Colonic mucosa (tissue), 4 donors: ENCODE measurements at regions of chr19 and their contacts with region 1.

Region 1: DNA sequence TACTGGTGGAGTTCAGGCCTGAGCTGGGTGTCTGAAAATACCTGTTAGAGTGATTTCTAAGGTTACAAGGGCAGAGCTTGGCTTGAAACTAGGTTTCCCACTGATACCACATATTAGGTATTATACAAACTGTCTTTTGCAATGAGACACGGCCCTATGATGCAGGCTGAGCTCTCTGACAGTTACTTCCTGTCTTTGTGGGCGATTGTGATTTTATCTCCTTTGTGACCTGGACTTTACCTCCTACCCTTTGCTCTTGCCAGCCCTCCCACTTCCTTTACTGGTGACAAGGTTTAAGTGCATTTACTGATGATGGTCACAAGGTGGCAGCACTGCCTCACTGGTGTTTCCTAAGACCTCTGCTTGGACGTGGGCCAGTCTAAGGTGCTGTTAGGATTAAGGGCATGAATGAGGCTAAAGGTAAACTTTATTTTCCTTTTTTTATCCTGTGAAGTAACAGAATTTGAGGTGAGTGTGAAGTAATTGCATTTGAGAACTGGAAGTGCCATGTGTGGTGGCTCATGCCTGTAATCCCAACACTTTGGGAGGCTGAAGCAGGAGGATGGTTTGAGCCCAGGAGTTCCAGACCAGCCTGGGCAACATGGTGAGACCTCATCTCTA is 7.7 kb upstream of the CXCL17 start:
- DNase-seq: peak; percentile 93
- H3K4me3 ChIP-seq: no peak overlapping the region
- H3K27ac ChIP-seq: peak overlapping the region; percentile 12
- H3K4me1 ChIP-seq: peaks cover 2% of the 10 kb centered on the region
- H3K27me3 ChIP-seq: no peaks in the 10 kb centered on the region
- CTCF ChIP-seq: peak; percentile 83

Region 2: GRCh38 chr19:42352301-42353259 is 97.8 kb before region 1 on chr19:
- intact Hi-C with region 1: no loop called
- DNase-seq: no peak
- H3K4me3 ChIP-seq: no peak overlapping the region
- H3K27ac ChIP-seq: no peak overlapping the region
- H3K4me1 ChIP-seq: no peaks in the 10 kb centered on the region
- H3K27me3 ChIP-seq: no peaks in the 10 kb centered on the region
- CTCF ChIP-seq: no peak

Region 3: GRCh38 chr19:42529248-42529764 is 78.9 kb after region 1 on chr19:
- intact Hi-C with region 1: loop called (anchors 1 kb)
- DNase-seq: peak; percentile 85
- H3K4me3 ChIP-seq: peak overlapping the region; percentile 23
- H3K27ac ChIP-seq: peak overlapping the region; percentile 83
- H3K4me1 ChIP-seq: peaks cover 5% of the 10 kb centered on the region
- H3K27me3 ChIP-seq: no peaks in the 10 kb centered on the region
- CTCF ChIP-seq: peak; percentile 96